ENCODE measurements at regions of chr1 and their contacts with region 1.

Region 1: DNA sequence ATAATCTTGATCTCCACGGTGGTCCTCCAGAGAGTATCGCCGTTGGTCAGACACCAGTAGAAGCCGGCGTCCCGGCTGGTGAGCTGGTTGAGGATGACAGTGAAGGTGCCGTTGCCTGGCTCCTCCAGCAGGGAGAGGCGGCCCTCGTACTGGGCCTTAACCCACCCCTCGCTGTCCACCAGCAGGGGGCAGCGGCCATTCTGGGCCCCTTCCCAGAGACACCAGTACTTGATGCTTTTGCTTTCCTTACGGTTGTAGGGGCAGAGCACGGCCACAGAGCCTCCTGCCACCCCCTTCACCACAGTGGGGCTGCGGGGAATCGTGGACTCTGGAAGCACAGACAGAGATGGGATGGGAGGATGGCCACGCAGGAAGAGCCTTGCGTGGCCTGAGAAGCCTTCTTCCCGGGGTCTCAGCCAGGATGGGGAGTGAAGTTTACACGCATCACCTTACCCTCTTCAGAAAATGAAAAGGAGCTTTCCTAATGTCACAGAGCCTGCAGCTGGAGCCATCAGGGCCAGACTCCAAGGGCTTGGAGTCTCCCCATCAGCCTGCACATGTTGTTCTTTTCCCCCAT is 10.7 kb downstream of the PIGR start:
- DNase-seq: no peak
- ATAC-seq: peak; percentile 84
- H3K4me3 ChIP-seq: no peak overlapping the region
- H3K27ac ChIP-seq: no peak overlapping the region
- H3K4me1 ChIP-seq: no peaks in the 10 kb centered on the region
- H3K27me3 ChIP-seq: no peaks in the 10 kb centered on the region
- CTCF ChIP-seq: peak; percentile 77 to 90 (median 87)
- POLR2A ChIP-seq: no peak
- RAD21 ChIP-seq: peak; percentile 47

Region 2: GRCh38 chr1:206856674-206857464 is 78.7 kb before region 1 on chr1:
- CTCF ChIA-PET with region 1: no interaction called
- POLR2A ChIA-PET with region 1: no interaction called
- RAD21 ChIA-PET with region 1: no interaction called
- intact Hi-C with region 1: no loop called
- DNase-seq: peak; percentile 16
- ATAC-seq: peak; percentile 95
- H3K4me3 ChIP-seq: no peak overlapping the region
- H3K27ac ChIP-seq: no peak overlapping the region
- H3K4me1 ChIP-seq: no peaks in the 10 kb centered on the region
- H3K27me3 ChIP-seq: no peaks in the 10 kb centered on the region
- CTCF ChIP-seq: peak; percentile 65 to 86 (median 68); a peak in 5 of 6 replicates
- POLR2A ChIP-seq: no peak
- RAD21 ChIP-seq: peak; percentile 34; the same call in 1 of the 2 replicates

Region 3: GRCh38 chr1:206946261-206946660 is 10.7 kb after region 1 on chr1 and contains the start of gene PIGR:
- CTCF ChIA-PET with region 1: interaction called, 14 read pairs
- POLR2A ChIA-PET with region 1: no interaction called
- RAD21 ChIA-PET with region 1: no interaction called
- intact Hi-C with region 1: no loop called
- DNase-seq: no peak
- ATAC-seq: no peak
- H3K4me3 ChIP-seq: no peak within 1 kb of the TSS
- H3K27ac ChIP-seq: no peak within 1 kb of the TSS
- H3K4me1 ChIP-seq: no peaks in the 10 kb centered on the region
- H3K27me3 ChIP-seq: peaks cover 11% of the 10 kb centered on the region; the same call in 1 of the 2 replicates
- CTCF ChIP-seq: no peak
- POLR2A ChIP-seq: no peak
- RAD21 ChIP-seq: no peak
- total RNA-seq, gene PIGR: 2.6 TPM

Region 4: DNA sequence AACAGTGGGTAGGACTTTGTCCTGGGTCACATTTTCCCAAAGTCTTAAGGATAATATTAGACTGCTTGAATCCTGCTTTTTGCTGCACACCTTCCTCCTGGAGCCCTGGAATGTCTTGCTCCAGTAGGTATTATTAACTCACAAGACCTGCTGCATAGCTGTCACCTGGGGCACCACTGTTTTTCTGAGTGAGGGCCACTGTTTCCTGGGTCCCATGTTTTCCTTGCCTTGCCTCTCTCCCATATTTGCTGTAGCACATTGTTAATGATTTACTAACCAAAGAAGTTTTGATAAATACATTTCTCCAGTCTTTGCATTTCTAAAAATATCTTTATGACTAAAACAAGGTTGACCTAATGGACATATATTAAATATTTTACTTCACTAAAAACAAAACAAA is 57.2 kb after region 1 on chr1:
- CTCF ChIA-PET with region 1: no interaction called
- POLR2A ChIA-PET with region 1: no interaction called
- RAD21 ChIA-PET with region 1: no interaction called
- intact Hi-C with region 1: no loop called
- DNase-seq: no peak
- ATAC-seq: no peak
- H3K4me3 ChIP-seq: no peak overlapping the region
- H3K27ac ChIP-seq: no peak overlapping the region
- H3K4me1 ChIP-seq: no peaks in the 10 kb centered on the region
- H3K27me3 ChIP-seq: no peaks in the 10 kb centered on the region
- CTCF ChIP-seq: no peak
- POLR2A ChIP-seq: no peak
- RAD21 ChIP-seq: no peak

Measured in HCT116 (cell line).